HepG2 (cell line): ENCODE measurements at regions of chr18 and their contacts with region 1.

Region 1: DNA sequence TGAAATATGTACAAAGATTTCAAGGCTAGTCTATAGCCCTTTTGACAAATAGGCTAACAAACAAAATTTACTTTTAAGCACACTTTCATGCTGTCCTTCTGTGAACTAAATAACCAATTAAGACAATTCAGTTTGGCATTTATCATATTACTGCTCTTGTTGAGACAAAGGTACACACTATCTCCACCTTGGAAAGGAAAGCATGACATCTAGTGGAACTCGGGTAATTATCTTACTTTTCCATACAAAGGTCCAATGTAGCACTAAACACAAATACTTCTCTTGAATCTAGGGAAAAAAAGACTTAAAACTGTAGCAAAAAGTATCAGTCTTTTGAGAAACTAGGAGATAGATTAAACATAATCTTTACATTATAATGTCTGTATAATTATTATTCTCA is 125.0 kb upstream of the CD226 start:
- DNase-seq: peak; percentile 34
- ATAC-seq: peak; percentile 52; the same call in 1 of the 3 replicates
- H3K4me3 ChIP-seq: no peak overlapping the region
- H3K27ac ChIP-seq: no peak overlapping the region
- H3K4me1 ChIP-seq: no peaks in the 10 kb centered on the region
- H3K27me3 ChIP-seq: no peaks in the 10 kb centered on the region
- CTCF ChIP-seq: peak; percentile 70
- EP300 ChIP-seq: no peak
- POLR2A ChIP-seq: no peak
- RAD21 ChIP-seq: no peak

Region 2: DNA sequence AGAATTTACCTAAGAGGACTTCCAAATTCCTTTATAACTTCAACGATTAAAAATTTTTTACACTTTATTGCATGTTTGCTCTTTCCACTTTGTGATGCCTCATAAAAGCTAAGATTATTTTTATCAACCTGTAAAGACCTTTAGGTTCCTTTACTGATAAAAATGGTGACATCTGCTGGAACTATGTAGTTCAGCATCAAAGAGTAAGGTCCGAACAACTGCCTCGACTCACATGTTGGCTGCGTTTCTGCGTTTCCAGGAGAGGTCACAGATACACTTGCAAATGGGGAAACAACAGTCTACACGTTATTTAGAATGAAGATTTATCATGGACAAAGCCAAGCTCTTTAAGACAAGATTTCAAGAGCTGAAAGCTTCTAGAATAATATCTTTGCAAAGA is 1339.0 kb before region 1 on chr18:
- CTCF ChIA-PET with region 1: no interaction called
- POLR2A ChIA-PET with region 1: no interaction called
- in situ Hi-C with region 1: no loop called
- intact Hi-C with region 1: no loop called
- DNase-seq: no peak
- ATAC-seq: no peak
- H3K4me3 ChIP-seq: no peak overlapping the region
- H3K27ac ChIP-seq: no peak overlapping the region
- H3K4me1 ChIP-seq: no peaks in the 10 kb centered on the region
- H3K27me3 ChIP-seq: no peaks in the 10 kb centered on the region
- CTCF ChIP-seq: no peak
- EP300 ChIP-seq: no peak
- POLR2A ChIP-seq: no peak
- RAD21 ChIP-seq: no peak

Region 3: DNA sequence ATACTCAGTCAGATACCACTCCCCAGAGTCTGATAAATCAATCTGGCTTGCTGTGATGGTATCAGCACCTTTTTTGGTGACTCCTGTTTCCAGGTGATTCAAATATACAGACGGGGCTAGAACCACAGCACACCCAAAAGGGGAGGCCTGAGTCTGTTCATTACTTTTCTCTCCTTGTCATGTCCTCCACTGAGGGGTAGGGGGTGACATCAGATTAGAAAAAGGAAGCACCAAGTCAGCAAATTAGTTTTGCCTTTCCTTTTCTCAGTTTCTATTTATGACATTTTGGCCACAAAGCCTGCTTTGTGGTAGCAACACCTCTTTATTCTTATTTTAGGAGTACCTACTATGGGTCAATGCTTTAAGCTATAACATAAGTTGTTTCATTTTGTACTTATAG is 1147.4 kb before region 1 on chr18:
- CTCF ChIA-PET with region 1: no interaction called
- POLR2A ChIA-PET with region 1: no interaction called
- in situ Hi-C with region 1: no loop called
- intact Hi-C with region 1: loop called (anchors 5 kb)
- DNase-seq: peak; percentile 13
- ATAC-seq: peak; percentile 75
- H3K4me3 ChIP-seq: no peak overlapping the region
- H3K27ac ChIP-seq: no peak overlapping the region
- H3K4me1 ChIP-seq: peaks cover 2% of the 10 kb centered on the region; the same call in 1 of the 2 replicates
- H3K27me3 ChIP-seq: no peaks in the 10 kb centered on the region
- CTCF ChIP-seq: peak; percentile 49
- EP300 ChIP-seq: no peak
- POLR2A ChIP-seq: no peak
- RAD21 ChIP-seq: 0 out of 2 replicates have a peak, but pooled peaks have one; percentile 25

Region 4: GRCh38 chr18:69400253-69400975 is 672.3 kb before region 1 on chr18 and contains the start of gene DOK6:
- CTCF ChIA-PET with region 1: no interaction called
- POLR2A ChIA-PET with region 1: no interaction called
- in situ Hi-C with region 1: no loop called
- intact Hi-C with region 1: loop called (anchors 5 kb)
- DNase-seq: peak; percentile 84
- ATAC-seq: peak; percentile 86
- H3K4me3 ChIP-seq: peak within 1 kb of the TSS; percentile 71 to 83 (median 82)
- H3K27ac ChIP-seq: peak within 1 kb of the TSS; percentile 77
- H3K4me1 ChIP-seq: peaks cover 45% of the 10 kb centered on the region
- H3K27me3 ChIP-seq: peaks cover 0 to 4% of the 10 kb centered on the region in 2 experiments; a peak in 3 of 5 replicates
- CTCF ChIP-seq: no peak
- EP300 ChIP-seq: no peak
- POLR2A ChIP-seq: peak; percentile 57 to 72
- RAD21 ChIP-seq: no peak
- total RNA-seq, gene DOK6: 14.7 and 17.2 TPM in 2 replicates

Region 5: DNA sequence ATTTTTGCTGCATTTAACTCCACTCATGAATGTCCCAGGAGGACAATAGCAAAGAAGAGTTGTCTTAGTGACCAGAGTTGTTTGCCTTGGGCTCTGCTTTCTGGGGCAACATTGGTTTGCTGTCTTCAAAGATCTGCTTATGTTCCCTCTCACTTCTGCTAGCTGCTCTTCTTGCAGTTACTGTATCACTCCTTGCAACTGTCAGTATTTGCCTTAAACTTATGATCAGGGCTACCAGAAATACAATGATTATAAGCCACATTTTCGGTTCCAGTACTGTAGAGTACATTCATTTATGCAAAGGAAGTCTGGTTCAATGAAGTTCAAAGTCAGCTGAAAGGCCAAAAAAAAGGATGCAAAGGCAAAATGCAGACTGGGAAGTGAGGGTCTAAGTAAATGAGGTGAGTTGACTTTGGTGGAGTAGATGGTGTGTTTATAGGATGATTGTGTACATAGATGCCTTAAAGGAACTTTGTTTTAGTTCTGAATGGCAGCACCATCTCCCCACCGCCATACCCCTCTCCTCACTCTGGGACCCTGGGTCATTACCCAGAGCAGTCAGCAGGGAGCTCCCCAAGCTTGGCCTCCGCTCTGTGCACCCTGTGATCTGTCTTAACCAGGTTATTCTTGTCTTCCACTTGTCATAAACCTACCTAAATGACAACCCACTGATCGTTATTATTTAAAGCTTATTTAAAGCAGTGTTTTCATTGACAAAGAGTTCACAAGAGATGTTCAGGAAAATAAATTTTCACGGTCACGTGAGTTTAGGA is 436.0 kb before region 1 on chr18:
- CTCF ChIA-PET with region 1: no interaction called
- POLR2A ChIA-PET with region 1: no interaction called
- in situ Hi-C with region 1: no loop called
- intact Hi-C with region 1: loop called (anchors 5 kb)
- DNase-seq: peak; percentile 6
- ATAC-seq: peak; percentile 95
- H3K4me3 ChIP-seq: no peak overlapping the region
- H3K27ac ChIP-seq: no peak overlapping the region
- H3K4me1 ChIP-seq: no peaks in the 10 kb centered on the region
- H3K27me3 ChIP-seq: no peaks in the 10 kb centered on the region
- CTCF ChIP-seq: peak; percentile 71
- EP300 ChIP-seq: no peak
- POLR2A ChIP-seq: no peak
- RAD21 ChIP-seq: peak; percentile 79